PC-9 (cell line): ENCODE measurements at regions of chr11 and their contacts with region 1.

Region 1: DNA sequence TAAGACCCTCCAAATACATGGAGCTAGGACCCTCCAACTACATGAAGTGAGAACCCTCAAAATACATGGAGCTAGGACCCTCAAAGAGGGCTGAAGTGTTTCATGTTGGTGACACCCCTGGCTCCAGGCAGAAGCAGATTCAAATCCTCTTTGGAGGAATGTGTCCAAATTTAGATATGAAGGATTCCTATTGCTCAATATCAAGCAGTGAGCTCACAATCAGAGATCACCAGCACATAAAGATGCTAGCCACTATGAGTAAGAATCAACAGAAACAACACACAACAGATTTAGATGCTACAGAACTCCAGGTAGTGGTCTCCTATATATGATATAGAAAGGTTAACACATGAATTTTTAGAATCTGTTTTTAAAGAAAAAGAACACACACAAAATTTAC is 11.2 kb upstream of the RAB3IL1 start:
- DNase-seq: no peak
- H3K4me3 ChIP-seq: no peak overlapping the region
- H3K27ac ChIP-seq: no peak overlapping the region
- H3K4me1 ChIP-seq: 0 out of 2 replicates have a peak, but pooled peaks cover under 1% of the 10 kb centered on the region
- H3K27me3 ChIP-seq: no peaks in the 10 kb centered on the region
- CTCF ChIP-seq: no peak

Region 2: GRCh38 chr11:61860054-61860903 is 68.3 kb before region 1 on chr11:
- CTCF ChIA-PET with region 1: no interaction called
- POLR2A ChIA-PET with region 1: interaction called, 12 read pairs
- intact Hi-C with region 1: no loop called
- DNase-seq: peak in 1 of 2 experiments; percentile 46
- H3K4me3 ChIP-seq: no peak overlapping the region
- H3K27ac ChIP-seq: no peak overlapping the region
- H3K4me1 ChIP-seq: no peaks in the 10 kb centered on the region
- H3K27me3 ChIP-seq: no peaks in the 10 kb centered on the region
- CTCF ChIP-seq: no peak

Region 3: GRCh38 chr11:61947486-61948210 is 19.0 kb after region 1 on chr11:
- CTCF ChIA-PET with region 1: interaction called, 34 read pairs
- POLR2A ChIA-PET with region 1: no interaction called
- intact Hi-C with region 1: no loop called
- DNase-seq: peak; percentile 61 to 77
- H3K4me3 ChIP-seq: no peak overlapping the region
- H3K27ac ChIP-seq: no peak overlapping the region
- H3K4me1 ChIP-seq: peaks cover 23% of the 10 kb centered on the region
- H3K27me3 ChIP-seq: no peaks in the 10 kb centered on the region
- CTCF ChIP-seq: peak; percentile 95

Region 4: GRCh38 chr11:61961570-61962212 is 33.1 kb after region 1 on chr11:
- CTCF ChIA-PET with region 1: no interaction called
- POLR2A ChIA-PET with region 1: no interaction called
- intact Hi-C with region 1: no loop called
- DNase-seq: peak; percentile 68 to 76
- H3K4me3 ChIP-seq: no peak overlapping the region
- H3K27ac ChIP-seq: peak overlapping the region; percentile 99
- H3K4me1 ChIP-seq: peaks cover 59% of the 10 kb centered on the region
- H3K27me3 ChIP-seq: no peaks in the 10 kb centered on the region
- CTCF ChIP-seq: no peak

Region 5: GRCh38 chr11:61978703-61979661 is 50.4 kb after region 1 on chr11:
- CTCF ChIA-PET with region 1: no interaction called
- POLR2A ChIA-PET with region 1: no interaction called
- intact Hi-C with region 1: no loop called
- DNase-seq: peak in 1 of 2 experiments; percentile 78
- H3K4me3 ChIP-seq: no peak overlapping the region
- H3K27ac ChIP-seq: peak overlapping the region; percentile 72
- H3K4me1 ChIP-seq: peaks cover 70% of the 10 kb centered on the region
- H3K27me3 ChIP-seq: no peaks in the 10 kb centered on the region
- CTCF ChIP-seq: no peak